Mammary epithelial cell (primary cell): ENCODE measurements at regions of chrX and their contacts with region 1.

Region 1: GRCh38 chrX:48493890-48494364 is 14.9 kb upstream of the PORCN start:
- DNase-seq: no peak
- H3K4me3 ChIP-seq: no peak overlapping the region
- H3K27ac ChIP-seq: no peak overlapping the region
- H3K4me1 ChIP-seq: peaks cover 46% of the 10 kb centered on the region
- H3K27me3 ChIP-seq: no peaks in the 10 kb centered on the region
- CTCF ChIP-seq: peak; percentile 25 to 45

Region 2: DNA sequence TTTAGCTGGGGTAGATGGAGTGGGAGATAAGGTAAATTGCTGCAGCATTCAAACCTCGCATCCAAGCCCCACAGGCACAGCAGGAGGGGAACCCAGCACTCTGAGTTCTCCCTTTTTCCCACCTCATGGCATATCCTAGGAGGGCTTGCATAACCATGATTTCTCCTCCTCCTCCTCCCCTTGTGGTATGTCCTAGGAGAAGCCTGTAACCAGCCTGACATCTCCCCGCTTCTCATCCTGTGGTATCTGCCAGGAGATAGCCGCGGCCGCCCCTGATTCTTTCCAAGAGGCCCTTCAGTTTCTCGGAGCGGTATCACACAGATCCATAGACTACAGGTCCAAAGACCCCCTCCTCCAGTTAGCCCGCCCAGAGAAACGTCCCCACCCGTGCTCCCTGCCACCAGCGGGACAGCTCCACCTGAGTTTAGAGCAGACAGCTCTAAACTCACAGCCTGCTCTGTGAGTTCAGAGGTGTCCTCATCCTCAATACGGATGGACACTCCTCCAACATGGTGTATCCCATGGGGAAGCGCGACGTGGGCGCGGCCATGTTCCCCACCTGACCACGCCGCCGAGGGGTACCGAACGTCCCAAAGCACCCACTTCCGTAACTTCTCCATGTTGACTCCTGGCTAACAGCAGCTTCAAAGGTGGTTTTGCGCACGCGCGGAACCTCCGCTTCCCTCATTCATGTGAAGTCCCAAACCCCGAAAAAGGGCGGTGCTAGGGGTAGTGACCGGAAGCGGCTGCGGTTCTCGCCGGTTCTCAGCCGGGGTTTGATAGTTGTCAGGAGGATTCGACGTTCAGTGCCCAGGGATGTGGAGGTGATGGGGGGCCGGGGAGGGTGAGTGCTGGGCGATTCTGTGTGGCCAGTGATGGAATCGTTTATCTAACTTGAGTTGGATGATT is 657.5 kb before region 1 on chrX and contains the start of gene ZNF81:
- CTCF ChIA-PET with region 1: no interaction called
- dilution Hi-C with region 1: no loop called
- in situ Hi-C with region 1: no loop called
- intact Hi-C with region 1: loop called (anchors 10 kb)
- DNase-seq: peak; percentile 94
- H3K4me3 ChIP-seq: peak within 1 kb of the TSS; percentile 55 to 59 (median 56)
- H3K27ac ChIP-seq: peak within 1 kb of the TSS; percentile 59
- H3K4me1 ChIP-seq: no peaks in the 10 kb centered on the region
- H3K27me3 ChIP-seq: no peaks in the 10 kb centered on the region
- CTCF ChIP-seq: no peak
- total RNA-seq, gene ZNF81: 6.1 to 7.8 TPM

Region 3: GRCh38 chrX:48083212-48083611 is 410.7 kb before region 1 on chrX:
- CTCF ChIA-PET with region 1: no interaction called
- dilution Hi-C with region 1: loop called (anchors 10 kb)
- in situ Hi-C with region 1: loop called in 1 of 2 experiments (anchors 10 kb)
- intact Hi-C with region 1: loop called (anchors 1 kb)
- DNase-seq: peak; percentile 35
- H3K4me3 ChIP-seq: no peak overlapping the region
- H3K27ac ChIP-seq: no peak overlapping the region
- H3K4me1 ChIP-seq: peaks cover 9% of the 10 kb centered on the region
- H3K27me3 ChIP-seq: no peaks in the 10 kb centered on the region
- CTCF ChIP-seq: peak; percentile 53 to 63

Region 4: DNA sequence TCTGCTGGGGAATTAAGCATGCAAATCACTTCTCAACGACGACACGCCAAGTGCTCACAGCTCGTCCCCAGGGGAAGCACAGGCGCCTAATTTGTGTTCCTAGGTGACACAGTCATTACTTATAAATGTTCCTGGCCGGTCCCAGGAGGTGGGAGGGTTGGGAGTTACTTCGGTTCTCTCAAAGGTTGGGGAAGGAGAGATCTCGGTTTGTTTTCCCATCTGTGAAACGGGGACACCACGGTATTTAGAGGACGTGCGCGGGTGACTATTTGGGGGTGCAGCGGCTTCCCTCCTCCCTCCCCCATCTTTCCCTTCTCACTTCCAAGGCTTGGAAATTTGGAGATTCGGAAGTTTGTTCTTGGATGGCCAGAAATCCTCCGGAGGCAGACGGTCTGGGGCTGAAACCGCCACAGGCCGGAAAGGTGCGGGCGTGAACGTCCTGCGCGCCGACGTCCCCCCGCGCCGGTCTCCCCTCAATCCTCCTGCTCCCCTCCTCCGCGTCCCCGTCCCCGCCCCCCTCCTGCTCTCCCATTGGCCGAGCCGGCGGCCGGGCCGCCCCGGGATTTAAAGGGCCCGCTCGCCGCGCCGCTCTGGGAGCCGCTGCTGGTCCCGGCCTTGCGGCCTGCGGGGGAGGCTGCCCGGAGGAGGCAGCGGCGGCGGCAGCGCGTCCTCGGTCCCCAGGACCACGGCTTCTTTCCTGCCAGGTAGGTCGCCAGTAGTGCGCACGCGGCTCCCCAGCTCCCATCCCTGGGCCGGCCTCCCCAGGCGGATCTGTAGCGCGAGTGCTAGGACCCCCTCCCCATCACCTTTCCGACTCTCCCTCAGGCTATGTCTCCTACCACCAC is 14.7 kb after region 1 on chrX and contains the start of gene PORCN:
- CTCF ChIA-PET with region 1: no interaction called
- dilution Hi-C with region 1: no loop called
- in situ Hi-C with region 1: no loop called
- intact Hi-C with region 1: loop called (anchors 1 kb)
- DNase-seq: peak; percentile 67
- H3K4me3 ChIP-seq: peak within 1 kb of the TSS; percentile 53 to 83 (median 63)
- H3K27ac ChIP-seq: peak within 1 kb of the TSS; percentile 53
- H3K4me1 ChIP-seq: peaks cover 16% of the 10 kb centered on the region
- H3K27me3 ChIP-seq: no peaks in the 10 kb centered on the region
- CTCF ChIP-seq: no peak
- total RNA-seq, gene PORCN: 36.2 to 113 TPM

Region 5: GRCh38 chrX:48539345-48540027 is 45.6 kb after region 1 on chrX and contains the start of gene TBC1D25:
- CTCF ChIA-PET with region 1: no interaction called
- dilution Hi-C with region 1: no loop called
- in situ Hi-C with region 1: no loop called
- intact Hi-C with region 1: loop called (anchors 1 kb)
- DNase-seq: peak; percentile 93
- H3K4me3 ChIP-seq: peak within 1 kb of the TSS; percentile 54 to 59 (median 59)
- H3K27ac ChIP-seq: peak within 1 kb of the TSS; percentile 52
- H3K4me1 ChIP-seq: peaks cover 6% of the 10 kb centered on the region
- H3K27me3 ChIP-seq: no peaks in the 10 kb centered on the region
- CTCF ChIP-seq: peak; percentile 3 to 51
- total RNA-seq, gene TBC1D25: 14.7 to 16.7 TPM